Endothelial cell of umbilical vein (primary cell): ENCODE measurements at regions of chr7 and their contacts with region 1.

Region 1: DNA sequence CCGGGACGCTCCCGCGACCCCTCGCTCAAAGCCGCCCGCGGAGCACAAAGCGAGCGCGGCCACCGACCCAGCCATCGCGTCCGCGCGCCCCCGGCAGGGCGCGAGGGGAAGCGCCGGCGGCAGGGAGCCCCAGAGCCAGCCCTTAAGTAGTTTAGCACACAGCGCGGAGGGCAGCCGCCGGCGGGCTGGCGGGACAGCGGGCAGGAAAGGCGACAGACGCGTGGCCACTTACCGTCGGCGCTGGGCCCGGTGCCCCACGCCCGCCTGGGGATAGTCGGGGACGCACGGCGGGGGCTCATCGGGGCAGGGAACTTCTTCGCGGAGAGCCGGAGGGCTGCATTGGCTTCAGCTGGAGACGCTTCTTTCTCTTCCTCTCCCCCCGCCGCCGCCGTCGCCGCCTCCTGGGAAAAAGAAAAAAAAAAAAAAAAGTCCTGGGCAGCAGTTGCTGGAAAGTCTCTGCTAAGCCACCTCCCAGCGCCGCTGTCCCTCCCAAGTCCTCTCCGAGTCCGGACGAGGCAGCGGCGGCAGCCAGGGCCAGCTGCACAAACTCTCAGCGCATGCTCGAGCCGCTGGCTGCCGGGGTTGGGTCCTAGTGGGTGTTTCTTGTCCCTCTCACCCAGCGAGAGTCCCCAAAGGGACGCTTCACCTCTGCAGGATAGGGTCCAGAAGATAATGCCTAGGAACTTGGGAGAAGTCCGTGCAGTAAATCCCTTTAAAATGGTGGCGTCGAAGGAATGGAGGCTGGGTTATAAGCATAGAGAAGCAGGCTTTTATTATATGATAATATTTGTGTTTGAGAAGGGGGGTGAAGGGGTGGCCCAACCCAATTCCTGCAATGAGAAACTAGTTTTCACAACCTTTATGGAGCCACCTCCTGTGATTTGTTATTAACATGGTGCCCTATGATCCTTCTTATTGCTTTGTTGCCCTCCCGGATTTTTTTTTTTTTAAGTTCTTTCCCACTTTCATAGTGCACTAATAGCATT is at the start of gene TSPAN12:
- DNase-seq: peak; percentile 93
- H3K4me3 ChIP-seq: peak within 1 kb of the TSS; percentile 86 to 98 (median 97)
- H3K27ac ChIP-seq: peak within 1 kb of the TSS; percentile 95
- H3K4me1 ChIP-seq: peaks cover 15% of the 10 kb centered on the region
- H3K27me3 ChIP-seq: no peaks in the 10 kb centered on the region
- CTCF ChIP-seq: peak; percentile 67 to 76
- POLR2A ChIP-seq: peak; percentile 31
- total RNA-seq, gene TSPAN12: 19.0 and 19.8 TPM in 2 replicates

Region 2: GRCh38 chr7:120792091-120792860 is 65.6 kb before region 1 on chr7:
- CTCF ChIA-PET with region 1: interaction called, 9 read pairs
- POLR2A ChIA-PET with region 1: no interaction called
- dilution Hi-C with region 1: no loop called
- intact Hi-C with region 1: loop called (anchors 1 kb)
- DNase-seq: peak; percentile 72
- H3K4me3 ChIP-seq: no peak overlapping the region
- H3K27ac ChIP-seq: no peak overlapping the region
- H3K4me1 ChIP-seq: peaks cover 8% of the 10 kb centered on the region
- H3K27me3 ChIP-seq: no peaks in the 10 kb centered on the region
- CTCF ChIP-seq: peak; percentile 95
- POLR2A ChIP-seq: no peak

Region 3: DNA sequence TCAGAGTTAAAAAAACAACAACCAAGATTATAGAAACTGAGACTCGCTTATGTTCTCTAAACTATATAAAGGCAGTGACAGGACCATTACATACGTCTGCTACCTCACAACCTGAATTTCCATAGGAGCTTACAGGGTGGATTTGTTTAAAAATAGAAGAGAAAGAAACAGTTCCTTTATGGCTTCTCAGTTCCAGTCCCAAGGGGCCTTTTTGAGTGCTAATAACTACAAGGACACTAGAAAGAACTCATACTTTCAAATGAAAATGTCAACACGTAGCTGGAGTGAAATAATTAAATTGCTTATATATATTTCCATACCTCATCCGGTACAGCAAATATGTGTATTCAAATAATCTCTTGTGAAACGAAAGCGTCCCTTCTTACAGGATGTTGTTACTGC is 19.6 kb before region 1 on chr7:
- CTCF ChIA-PET with region 1: interaction called, 4 read pairs
- POLR2A ChIA-PET with region 1: no interaction called
- dilution Hi-C with region 1: no loop called
- intact Hi-C with region 1: loop called (anchors 1 kb)
- DNase-seq: peak; percentile 51
- H3K4me3 ChIP-seq: peak overlapping the region in 2 of 3 experiments; percentile 7 to 66
- H3K27ac ChIP-seq: peak overlapping the region; percentile 46
- H3K4me1 ChIP-seq: peaks cover 15% of the 10 kb centered on the region
- H3K27me3 ChIP-seq: no peaks in the 10 kb centered on the region
- CTCF ChIP-seq: no peak
- POLR2A ChIP-seq: no peak

Region 4: GRCh38 chr7:120941064-120941463 is 83.2 kb after region 1 on chr7:
- CTCF ChIA-PET with region 1: interaction called, 4 read pairs
- POLR2A ChIA-PET with region 1: no interaction called
- dilution Hi-C with region 1: no loop called
- intact Hi-C with region 1: loop called (anchors 1 kb)
- DNase-seq: peak; percentile 75
- H3K4me3 ChIP-seq: no peak overlapping the region
- H3K27ac ChIP-seq: peak overlapping the region; percentile 87
- H3K4me1 ChIP-seq: peaks cover 46% of the 10 kb centered on the region
- H3K27me3 ChIP-seq: no peaks in the 10 kb centered on the region
- CTCF ChIP-seq: peak in 1 of 2 donors; percentile 26
- POLR2A ChIP-seq: no peak

Region 5: GRCh38 chr7:121020652-121021051 is 162.8 kb after region 1 on chr7:
- CTCF ChIA-PET with region 1: no interaction called
- POLR2A ChIA-PET with region 1: no interaction called
- dilution Hi-C with region 1: no loop called
- intact Hi-C with region 1: loop called (anchors 2 kb)
- DNase-seq: peak; percentile 85
- H3K4me3 ChIP-seq: no peak overlapping the region
- H3K27ac ChIP-seq: peak overlapping the region; percentile 50
- H3K4me1 ChIP-seq: peaks cover 23% of the 10 kb centered on the region
- H3K27me3 ChIP-seq: no peaks in the 10 kb centered on the region
- CTCF ChIP-seq: no peak
- POLR2A ChIP-seq: no peak

Region 6: DNA sequence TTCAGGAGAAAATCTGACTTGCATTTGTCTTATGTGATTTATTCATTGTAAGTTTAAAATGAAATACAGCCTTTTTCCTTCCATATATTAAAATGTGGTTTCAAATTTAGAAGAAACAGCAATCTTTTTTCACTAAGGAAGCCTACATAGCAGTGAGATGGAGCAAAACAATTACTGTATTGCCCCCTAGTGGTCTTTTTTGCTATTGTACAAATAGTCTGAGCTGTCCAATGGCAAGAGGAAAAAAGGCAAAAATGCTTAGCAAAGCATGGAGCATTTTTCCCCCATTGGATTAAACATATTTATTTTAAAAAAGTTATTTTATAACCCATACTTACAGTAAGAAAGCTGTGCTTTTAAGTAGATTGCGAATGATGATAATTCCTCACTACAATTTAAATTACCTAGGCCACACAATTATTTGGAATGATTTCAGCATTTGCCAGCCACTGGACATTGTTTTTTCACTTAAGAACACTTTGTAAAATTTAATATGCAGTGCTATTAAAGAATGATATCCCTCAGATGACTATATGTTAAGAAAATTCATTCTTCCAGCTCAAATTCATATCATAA is 250.1 kb after region 1 on chr7:
- CTCF ChIA-PET with region 1: interaction called, 8 read pairs
- POLR2A ChIA-PET with region 1: no interaction called
- dilution Hi-C with region 1: no loop called
- intact Hi-C with region 1: loop called (anchors 2 kb)
- DNase-seq: peak; percentile 78
- H3K4me3 ChIP-seq: no peak overlapping the region
- H3K27ac ChIP-seq: no peak overlapping the region
- H3K4me1 ChIP-seq: no peaks in the 10 kb centered on the region
- H3K27me3 ChIP-seq: peaks cover 12 to 16% of the 10 kb centered on the region in 2 experiments
- CTCF ChIP-seq: peak; percentile 57 to 59
- POLR2A ChIP-seq: no peak